CD4-positive, alpha-beta T cell (primary cell): ENCODE measurements at regions of chr2 and their contacts with region 1.

Region 1: GRCh38 chr2:173402405-173402974 is 47.8 kb downstream of the CDCA7 start:
- DNase-seq: peak; percentile 49 to 83 (median 63)
- ATAC-seq: peak; percentile 74
- H3K4me3 ChIP-seq: no peak overlapping the region
- H3K4me3 Mint-ChIP-seq: no peak overlapping the region
- H3K27ac ChIP-seq: no peak overlapping the region
- H3K27ac Mint-ChIP-seq: no peak overlapping the region
- H3K4me1 ChIP-seq: peaks cover 5% of the 10 kb centered on the region
- H3K4me1 Mint-ChIP-seq: peaks cover 5% of the 10 kb centered on the region
- H3K27me3 ChIP-seq: peaks cover 22 to 61% of the 10 kb centered on the region in 2 experiments
- H3K27me3 Mint-ChIP-seq: peaks cover 67% of the 10 kb centered on the region
- CTCF ChIP-seq: peak; percentile 87

Region 2: DNA sequence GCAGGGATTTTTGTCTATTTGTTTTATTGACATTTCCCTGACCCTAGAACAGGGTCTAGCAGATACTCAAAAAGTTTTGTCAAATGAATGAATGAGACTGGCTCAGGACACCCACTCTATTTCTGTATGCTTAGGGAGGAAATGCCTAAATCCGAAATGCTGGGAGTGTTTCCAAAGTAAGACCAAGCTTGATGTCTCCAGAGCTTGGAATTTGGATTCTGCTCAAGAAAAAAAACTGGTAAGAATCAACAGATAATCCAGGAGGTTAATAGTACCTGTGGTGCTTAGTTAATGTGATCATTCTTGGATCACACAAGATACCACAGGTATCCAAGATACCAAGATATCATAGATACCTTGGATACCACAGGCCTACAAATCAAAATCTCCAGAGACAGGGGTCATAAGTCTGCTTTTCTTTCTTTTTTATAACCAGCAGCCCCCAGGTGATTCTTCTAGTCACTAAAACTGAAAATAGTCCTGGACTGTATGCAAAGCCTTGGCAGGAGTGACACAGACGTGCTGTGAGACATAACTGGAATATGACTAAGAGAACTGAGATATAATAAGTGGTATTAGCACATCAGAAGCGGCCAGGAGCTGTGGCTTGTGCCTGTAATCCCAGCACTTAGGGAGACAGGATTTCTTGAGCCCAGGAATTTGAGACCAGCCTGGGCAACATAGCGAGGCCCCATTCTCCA is 602.6 kb after region 1 on chr2:
- CTCF ChIA-PET with region 1: no interaction called
- POLR2A ChIA-PET with region 1: no interaction called
- intact Hi-C with region 1: loop called in 1 of 2 experiments (anchors 5 kb)
- DNase-seq: no peak
- ATAC-seq: no peak
- H3K4me3 ChIP-seq: no peak overlapping the region
- H3K4me3 Mint-ChIP-seq: no peak overlapping the region
- H3K27ac ChIP-seq: no peak overlapping the region
- H3K27ac Mint-ChIP-seq: no peak overlapping the region
- H3K4me1 ChIP-seq: no peaks in the 10 kb centered on the region
- H3K4me1 Mint-ChIP-seq: no peaks in the 10 kb centered on the region
- H3K27me3 ChIP-seq: no peaks in the 10 kb centered on the region
- H3K27me3 Mint-ChIP-seq: peaks cover 10% of the 10 kb centered on the region
- CTCF ChIP-seq: no peak

Region 3: DNA sequence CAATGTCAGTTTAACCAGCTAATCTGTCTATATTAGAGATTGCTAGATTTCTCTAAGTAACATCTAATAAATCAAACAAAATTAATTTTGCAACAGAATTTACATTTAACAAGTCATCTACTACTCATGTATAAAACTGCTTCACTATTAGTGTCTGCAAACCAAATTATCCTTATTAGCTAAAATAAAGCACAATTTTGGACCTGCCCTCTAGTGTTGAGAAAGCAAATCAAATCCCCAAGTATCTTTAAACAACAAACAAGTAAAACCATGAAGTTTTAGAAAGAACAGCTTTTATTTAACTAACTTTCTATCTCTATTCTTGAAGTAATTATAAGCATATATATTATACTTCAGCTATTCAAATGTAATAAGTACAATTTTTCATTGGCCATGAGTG is 675.8 kb after region 1 on chr2:
- CTCF ChIA-PET with region 1: no interaction called
- POLR2A ChIA-PET with region 1: no interaction called
- intact Hi-C with region 1: loop called in 1 of 2 experiments (anchors 2 kb)
- DNase-seq: peak in 1 of 14 experiments; percentile 15
- ATAC-seq: no peak
- H3K4me3 ChIP-seq: no peak overlapping the region
- H3K4me3 Mint-ChIP-seq: no peak overlapping the region
- H3K27ac ChIP-seq: no peak overlapping the region
- H3K27ac Mint-ChIP-seq: no peak overlapping the region
- H3K4me1 ChIP-seq: no peaks in the 10 kb centered on the region
- H3K4me1 Mint-ChIP-seq: no peaks in the 10 kb centered on the region
- H3K27me3 ChIP-seq: no peaks in the 10 kb centered on the region
- H3K27me3 Mint-ChIP-seq: no peaks in the 10 kb centered on the region
- CTCF ChIP-seq: peak; percentile 42

Region 4: GRCh38 chr2:174442546-174443510 is 1040.3 kb after region 1 on chr2:
- CTCF ChIA-PET with region 1: no interaction called
- POLR2A ChIA-PET with region 1: no interaction called
- intact Hi-C with region 1: loop called in 1 of 2 experiments (anchors 10 kb)
- DNase-seq: no peak
- ATAC-seq: no peak
- H3K4me3 ChIP-seq: no peak overlapping the region
- H3K4me3 Mint-ChIP-seq: no peak overlapping the region
- H3K27ac ChIP-seq: no peak overlapping the region
- H3K27ac Mint-ChIP-seq: no peak overlapping the region
- H3K4me1 ChIP-seq: no peaks in the 10 kb centered on the region
- H3K4me1 Mint-ChIP-seq: no peaks in the 10 kb centered on the region
- H3K27me3 ChIP-seq: no peaks in the 10 kb centered on the region
- H3K27me3 Mint-ChIP-seq: no peaks in the 10 kb centered on the region
- CTCF ChIP-seq: no peak